Posterior cingulate gyrus (tissue), 11 donors: ENCODE measurements at regions of chr5 and their contacts with region 1.

Region 1: DNA sequence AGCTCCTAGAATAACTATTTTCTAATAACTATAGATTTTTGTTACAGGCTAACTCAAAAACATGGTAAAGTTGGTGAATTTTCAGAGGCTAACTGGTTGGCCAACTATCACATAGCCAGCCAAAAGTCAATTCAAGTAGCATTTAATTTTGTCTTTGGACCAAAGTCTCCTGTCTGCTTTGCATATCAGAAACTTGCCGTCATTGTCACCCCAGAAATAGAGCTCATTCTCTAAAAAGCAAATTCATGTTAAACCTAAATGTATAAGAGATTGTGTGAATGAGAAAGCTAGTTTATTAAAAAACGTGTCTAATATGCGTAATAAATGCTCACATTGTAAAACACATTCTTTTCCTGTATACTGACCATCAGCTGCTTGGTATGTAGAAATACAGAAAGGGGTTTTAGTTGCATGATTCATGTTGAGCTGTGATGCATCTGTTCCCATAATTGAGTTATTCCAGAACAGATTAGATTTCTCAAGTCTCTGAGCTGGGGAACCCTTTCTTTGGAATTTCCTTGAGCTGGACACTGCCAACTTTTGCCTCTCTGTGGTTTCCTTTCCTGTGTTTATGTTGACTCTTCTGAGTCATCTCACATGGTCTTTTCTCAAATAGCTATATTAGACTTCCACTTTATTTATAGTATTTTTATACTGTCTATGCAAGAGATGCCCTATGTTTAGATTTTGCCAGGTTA is 7.3 kb downstream of the SRFBP1 start:
- DNase-seq: no peak

Region 2: DNA sequence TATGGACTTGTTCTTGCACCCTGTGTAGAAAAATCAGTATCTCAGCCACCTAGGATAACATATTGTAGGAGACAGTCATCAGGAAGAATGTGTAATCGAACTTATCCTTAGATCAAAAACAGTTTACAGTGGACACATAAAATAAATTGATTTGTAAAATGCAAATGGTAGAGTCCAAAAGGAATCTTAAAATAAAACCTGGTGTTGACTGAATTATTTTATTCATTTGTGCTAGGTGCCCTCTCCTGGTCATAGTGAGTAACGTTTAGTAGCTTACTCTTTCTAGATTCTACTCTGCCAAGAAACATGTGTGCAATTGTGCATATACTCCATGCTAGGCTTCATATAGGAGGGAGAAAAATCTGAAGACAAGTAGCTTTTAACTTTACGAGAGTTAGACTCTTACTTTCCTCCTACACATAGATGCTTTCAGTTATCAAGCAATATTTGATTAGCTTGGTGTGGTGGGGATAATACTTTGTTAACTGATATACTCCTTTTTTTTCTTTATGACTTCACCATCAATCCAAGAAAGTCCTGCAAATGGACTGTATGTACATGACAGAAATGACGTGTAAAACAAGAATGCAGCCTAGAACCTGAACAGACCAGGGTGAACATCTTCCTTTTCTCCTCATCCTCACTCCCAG is 132.7 kb after region 1 on chr5:
- intact Hi-C with region 1: loop called (anchors 2 kb)
- DNase-seq: no peak

Region 3: GRCh38 chr5:122156724-122157325 is 187.8 kb after region 1 on chr5:
- intact Hi-C with region 1: loop called (anchors 5 kb)
- DNase-seq: peak in 1 of 10 donors; percentile 11

Region 4: GRCh38 chr5:122332589-122333555 is 363.8 kb after region 1 on chr5:
- intact Hi-C with region 1: no loop called
- DNase-seq: no peak